ENCODE measurements at regions of chr3 and their contacts with region 1.

Region 1: GRCh38 chr3:113005611-113006010 is 14.8 kb downstream of the GTPBP8 start:
- DNase-seq: no peak
- H3K4me3 ChIP-seq: no peak overlapping the region
- H3K27me3 ChIP-seq: no peaks in the 10 kb centered on the region
- CTCF ChIP-seq: no peak

Region 2: GRCh38 chr3:112990672-112991602 is 14.7 kb before region 1 on chr3 and contains the start of gene GTPBP8:
- CTCF ChIA-PET with region 1: no interaction called
- POLR2A ChIA-PET with region 1: no interaction called
- DNase-seq: peak; percentile 50
- H3K4me3 ChIP-seq: peak within 1 kb of the TSS; percentile 98
- H3K27me3 ChIP-seq: no peaks in the 10 kb centered on the region
- CTCF ChIP-seq: peak; percentile 21; the same call in 1 of the 2 replicates
- polyA plus RNA-seq, gene GTPBP8: 16.7 and 18.3 TPM in 2 replicates

Region 3: GRCh38 chr3:113019182-113020137 is 13.8 kb after region 1 on chr3:
- CTCF ChIA-PET with region 1: interaction called, 19 read pairs
- POLR2A ChIA-PET with region 1: interaction called, 21 read pairs
- DNase-seq: peak; percentile 69
- H3K4me3 ChIP-seq: peak overlapping the region; percentile 65
- H3K27me3 ChIP-seq: no peaks in the 10 kb centered on the region
- CTCF ChIP-seq: no peak

Measured in BJ (cell line).